ENCODE measurements at regions of chr6 and their contacts with region 1.

Region 1: DNA sequence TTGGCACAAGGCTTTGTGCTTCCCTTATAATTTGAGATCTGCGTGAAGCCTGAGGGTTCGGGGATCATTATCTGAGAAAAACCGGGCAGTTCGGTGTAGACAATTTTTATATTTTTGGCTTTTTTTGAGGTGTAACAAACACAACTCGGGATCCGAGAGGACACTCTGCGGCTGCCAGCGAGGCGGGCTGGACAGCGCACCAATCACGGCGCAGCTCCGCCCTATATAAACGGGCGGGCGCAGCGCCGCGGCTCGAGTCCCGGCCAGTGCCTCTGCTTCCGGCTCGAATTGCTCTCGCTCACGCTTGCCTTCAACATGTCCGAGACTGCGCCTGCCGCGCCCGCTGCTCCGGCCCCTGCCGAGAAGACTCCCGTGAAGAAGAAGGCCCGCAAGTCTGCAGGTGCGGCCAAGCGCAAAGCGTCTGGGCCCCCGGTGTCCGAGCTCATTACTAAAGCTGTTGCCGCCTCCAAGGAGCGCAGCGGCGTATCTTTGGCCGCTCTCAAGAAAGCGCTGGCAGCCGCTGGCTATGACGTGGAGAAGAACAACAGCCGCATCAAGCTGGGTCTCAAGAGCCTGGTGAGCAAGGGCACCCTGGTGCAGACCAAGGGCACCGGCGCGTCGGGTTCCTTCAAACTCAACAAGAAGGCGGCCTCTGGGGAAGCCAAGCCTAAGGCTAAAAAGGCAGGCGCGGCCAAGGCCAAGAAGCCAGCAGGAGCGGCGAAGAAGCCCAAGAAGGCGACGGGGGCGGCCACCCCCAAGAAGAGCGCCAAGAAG is 69.0 kb downstream of the HFE start:
- DNase-seq: peak; percentile 87
- ATAC-seq: peak; percentile 59
- H3K4me3 Mint-ChIP-seq: peak overlapping the region; percentile 88
- H3K27ac Mint-ChIP-seq: peak overlapping the region; percentile 99
- H3K4me1 Mint-ChIP-seq: peaks cover 45% of the 10 kb centered on the region
- H3K27me3 Mint-ChIP-seq: no peaks in the 10 kb centered on the region
- CTCF ChIP-seq: no peak

Region 2: DNA sequence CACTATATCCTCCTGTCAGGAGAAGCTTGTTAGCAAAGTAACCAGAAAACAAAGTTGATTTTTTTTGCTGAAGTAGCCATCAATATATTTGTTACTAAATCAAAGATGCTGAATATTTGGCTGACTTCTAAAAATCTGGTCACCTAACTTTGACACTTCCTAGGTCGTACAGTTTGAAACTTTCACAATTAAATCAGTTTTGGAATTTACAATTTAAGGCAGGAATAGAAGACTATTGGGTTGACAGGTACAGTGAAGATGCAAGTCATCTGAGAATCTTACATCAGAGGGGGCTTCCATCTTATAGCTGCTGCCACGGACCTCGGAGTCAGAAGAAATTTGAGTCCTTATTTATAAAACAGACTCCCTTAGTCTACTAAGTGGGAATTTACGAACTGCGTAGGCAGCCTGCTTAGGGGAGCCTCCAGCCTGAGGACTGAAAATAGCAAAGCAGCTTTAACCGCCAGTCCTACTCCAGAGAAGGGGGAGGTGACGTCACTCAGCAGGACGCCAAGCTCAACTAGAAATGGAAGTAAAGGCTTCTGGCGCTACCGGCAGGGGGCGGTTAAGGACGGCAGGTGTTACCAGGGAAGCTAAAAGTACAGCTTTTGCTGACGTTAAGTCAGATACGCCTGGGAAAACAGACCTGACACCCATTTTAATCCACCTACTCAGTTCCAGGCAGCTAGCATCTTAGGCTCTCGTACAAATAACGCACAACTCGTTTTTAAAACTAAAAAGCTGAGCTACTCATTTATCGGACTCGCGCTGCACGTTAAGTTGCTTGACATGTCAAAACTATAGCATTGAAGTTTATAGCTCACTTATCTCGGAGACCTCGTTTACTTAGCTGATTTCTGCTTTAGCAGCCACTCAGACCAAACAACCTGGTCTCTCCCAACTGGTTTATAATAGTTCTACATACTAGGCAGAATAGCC is 130.1 kb before region 1 on chr6:
- CTCF ChIA-PET with region 1: no interaction called
- POLR2A ChIA-PET with region 1: interaction called, 91 read pairs
- intact Hi-C with region 1: no loop called
- DNase-seq: peak; percentile 76
- ATAC-seq: peak; percentile 39
- H3K4me3 Mint-ChIP-seq: peak overlapping the region; percentile 96
- H3K27ac Mint-ChIP-seq: peak overlapping the region; percentile 99
- H3K4me1 Mint-ChIP-seq: peaks cover 35% of the 10 kb centered on the region
- H3K27me3 Mint-ChIP-seq: peaks cover 2% of the 10 kb centered on the region
- CTCF ChIP-seq: no peak

Region 3: DNA sequence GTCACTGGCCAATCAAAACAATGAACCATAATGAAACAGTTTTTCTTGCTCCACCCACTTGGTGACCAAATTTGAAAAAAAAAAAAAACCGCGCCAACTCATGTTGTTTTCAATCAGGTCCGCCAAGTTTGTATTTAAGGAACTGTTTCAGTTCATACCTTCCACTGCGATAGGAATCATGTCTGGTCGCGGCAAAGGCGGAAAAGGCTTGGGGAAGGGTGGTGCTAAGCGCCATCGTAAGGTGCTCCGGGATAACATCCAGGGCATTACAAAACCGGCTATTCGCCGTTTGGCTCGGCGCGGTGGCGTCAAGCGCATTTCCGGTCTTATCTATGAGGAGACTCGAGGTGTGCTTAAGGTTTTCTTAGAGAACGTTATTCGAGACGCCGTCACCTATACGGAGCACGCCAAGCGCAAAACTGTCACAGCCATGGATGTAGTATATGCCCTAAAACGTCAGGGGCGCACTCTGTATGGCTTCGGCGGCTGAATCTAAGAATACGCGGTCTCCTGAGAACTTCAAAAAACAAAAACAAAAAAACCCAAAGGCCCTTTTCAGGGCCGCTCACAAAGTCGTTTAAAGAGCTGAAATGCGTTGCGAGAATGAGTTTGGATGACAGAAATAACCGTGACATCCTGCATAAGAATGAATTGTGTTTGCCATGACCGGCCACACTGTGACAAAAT is 52.4 kb before region 1 on chr6:
- CTCF ChIA-PET with region 1: interaction called, 4 read pairs
- POLR2A ChIA-PET with region 1: interaction called, 160 read pairs
- intact Hi-C with region 1: loop called (anchors 1 kb)
- DNase-seq: peak; percentile 83
- ATAC-seq: peak; percentile 85
- H3K4me3 Mint-ChIP-seq: peak overlapping the region; percentile 85
- H3K27ac Mint-ChIP-seq: peak overlapping the region; percentile 98
- H3K4me1 Mint-ChIP-seq: peaks cover 12% of the 10 kb centered on the region
- H3K27me3 Mint-ChIP-seq: peaks cover 3% of the 10 kb centered on the region
- CTCF ChIP-seq: no peak

Region 4: GRCh38 chr6:26196846-26197648 is 40.8 kb after region 1 on chr6:
- CTCF ChIA-PET with region 1: interaction called, 4 read pairs
- POLR2A ChIA-PET with region 1: interaction called, 1,229 read pairs
- intact Hi-C with region 1: loop called (anchors 1 kb)
- DNase-seq: peak; percentile 63
- ATAC-seq: peak; percentile 53
- H3K4me3 Mint-ChIP-seq: peak overlapping the region; percentile 93
- H3K27ac Mint-ChIP-seq: peak overlapping the region; percentile 96
- H3K4me1 Mint-ChIP-seq: peaks cover 52% of the 10 kb centered on the region
- H3K27me3 Mint-ChIP-seq: no peaks in the 10 kb centered on the region
- CTCF ChIP-seq: no peak

Region 5: GRCh38 chr6:26270903-26271667 is 114.8 kb after region 1 on chr6:
- CTCF ChIA-PET with region 1: no interaction called
- POLR2A ChIA-PET with region 1: interaction called, 173 read pairs
- intact Hi-C with region 1: loop called (anchors 1 kb)
- DNase-seq: peak; percentile 49
- ATAC-seq: peak; percentile 18
- H3K4me3 Mint-ChIP-seq: no peak overlapping the region
- H3K27ac Mint-ChIP-seq: no peak overlapping the region
- H3K4me1 Mint-ChIP-seq: peaks cover 24% of the 10 kb centered on the region
- H3K27me3 Mint-ChIP-seq: no peaks in the 10 kb centered on the region
- CTCF ChIP-seq: no peak

Region 6: DNA sequence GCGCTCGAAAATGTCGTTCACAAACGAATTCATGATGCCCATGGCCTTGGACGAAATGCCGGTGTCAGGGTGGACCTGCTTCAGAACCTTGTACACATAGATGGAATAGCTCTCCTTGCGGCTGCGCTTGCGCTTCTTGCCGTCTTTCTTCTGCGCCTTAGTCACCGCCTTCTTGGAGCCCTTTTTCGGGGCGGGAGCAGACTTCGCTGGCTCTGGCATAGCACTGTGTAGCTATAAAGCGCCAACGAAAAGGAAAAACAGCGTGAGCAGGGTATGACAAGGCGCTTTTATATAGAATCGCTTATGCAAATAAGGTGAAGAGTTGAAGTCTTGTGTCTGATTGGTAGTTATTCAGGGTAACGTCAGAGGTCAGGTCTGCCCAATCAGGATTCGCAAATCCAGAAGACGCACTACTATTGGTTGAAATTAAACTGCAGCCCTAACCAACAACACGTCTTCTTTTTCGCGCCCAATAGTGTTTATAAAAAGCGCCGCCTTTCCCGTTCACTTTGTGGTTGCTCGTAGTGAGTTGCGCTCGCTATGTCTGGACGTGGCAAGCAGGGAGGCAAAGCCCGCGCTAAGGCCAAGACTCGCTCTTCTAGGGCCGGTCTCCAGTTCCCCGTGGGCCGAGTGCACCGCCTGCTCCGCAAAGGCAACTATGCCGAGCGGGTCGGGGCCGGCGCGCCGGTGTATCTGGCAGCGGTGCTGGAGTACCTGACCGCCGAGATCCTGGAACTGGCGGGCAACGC is 976.4 kb after region 1 on chr6:
- CTCF ChIA-PET with region 1: no interaction called
- POLR2A ChIA-PET with region 1: interaction called, 93 read pairs
- intact Hi-C with region 1: loop called (anchors 1 kb)
- DNase-seq: peak; percentile 77
- ATAC-seq: peak; percentile 84
- H3K4me3 Mint-ChIP-seq: no peak overlapping the region
- H3K27ac Mint-ChIP-seq: no peak overlapping the region
- H3K4me1 Mint-ChIP-seq: peaks cover 14% of the 10 kb centered on the region
- H3K27me3 Mint-ChIP-seq: no peaks in the 10 kb centered on the region
- CTCF ChIP-seq: no peak

Region 7: GRCh38 chr6:27168586-27169443 is 1012.6 kb after region 1 on chr6:
- CTCF ChIA-PET with region 1: no interaction called
- POLR2A ChIA-PET with region 1: no interaction called
- intact Hi-C with region 1: no loop called
- DNase-seq: no peak
- ATAC-seq: no peak
- H3K4me3 Mint-ChIP-seq: no peak overlapping the region
- H3K27ac Mint-ChIP-seq: no peak overlapping the region
- H3K4me1 Mint-ChIP-seq: no peaks in the 10 kb centered on the region
- H3K27me3 Mint-ChIP-seq: peaks cover 8% of the 10 kb centered on the region
- CTCF ChIP-seq: no peak

Region 8: GRCh38 chr6:27864906-27865849 is 1708.9 kb after region 1 on chr6:
- CTCF ChIA-PET with region 1: no interaction called
- POLR2A ChIA-PET with region 1: interaction called, 136 read pairs
- intact Hi-C with region 1: no loop called
- DNase-seq: peak; percentile 68
- ATAC-seq: peak; percentile 85
- H3K4me3 Mint-ChIP-seq: peak overlapping the region; percentile 98
- H3K27ac Mint-ChIP-seq: peak overlapping the region; percentile 99
- H3K4me1 Mint-ChIP-seq: peaks cover 48% of the 10 kb centered on the region
- H3K27me3 Mint-ChIP-seq: no peaks in the 10 kb centered on the region
- CTCF ChIP-seq: no peak

Measured in activated B cell treated with CpG ODN at 0.5 μM for 24 hours (primary cell).